ENCODE measurements at regions of chr2 and their contacts with region 1.

Region 1: GRCh38 chr2:85635636-85636035 is 19.6 kb downstream of the USP39 start:
- DNase-seq: no peak
- H3K4me3 ChIP-seq: no peak overlapping the region
- H3K27me3 ChIP-seq: no peaks in the 10 kb centered on the region
- CTCF ChIP-seq: no peak

Region 2: GRCh38 chr2:85549826-85550225 is 85.8 kb before region 1 on chr2:
- CTCF ChIA-PET with region 1: no interaction called
- POLR2A ChIA-PET with region 1: no interaction called
- DNase-seq: peak; percentile 81
- H3K4me3 ChIP-seq: no peak overlapping the region
- H3K27me3 ChIP-seq: no peaks in the 10 kb centered on the region
- CTCF ChIP-seq: no peak

Region 3: GRCh38 chr2:85619617-85620016 is 16.0 kb before region 1 on chr2:
- CTCF ChIA-PET with region 1: interaction called, 19 read pairs
- POLR2A ChIA-PET with region 1: no interaction called
- DNase-seq: no peak
- H3K4me3 ChIP-seq: no peak overlapping the region
- H3K27me3 ChIP-seq: no peaks in the 10 kb centered on the region
- CTCF ChIP-seq: no peak

Measured in BJ (cell line).